Adrenal gland (tissue), 19 donors: ENCODE measurements at regions of chr5 and their contacts with region 1.

Region 1: DNA sequence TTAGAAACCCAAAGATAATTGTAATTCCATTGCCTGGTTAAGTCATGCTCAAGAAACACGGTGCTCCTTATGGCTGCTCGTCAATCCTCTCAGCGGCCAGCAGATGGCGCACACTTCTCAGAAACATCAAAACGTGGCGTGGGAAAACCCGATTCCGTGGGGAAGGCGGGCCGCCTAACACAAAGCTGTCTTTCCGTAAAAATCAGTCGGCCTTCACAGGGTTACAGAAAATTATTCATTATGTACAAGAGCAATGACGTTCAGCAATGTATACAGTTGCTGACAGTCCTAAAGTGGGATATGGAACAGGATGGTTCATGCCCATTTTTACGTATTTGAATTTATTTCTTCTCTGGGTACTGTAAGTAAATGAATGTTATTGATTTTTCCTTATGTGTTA is 83.5 kb downstream of the PDE4D start:
- DNase-seq: peak; percentile 54 to 85 (median 72)
- H3K4me3 ChIP-seq: no peak overlapping the region
- H3K27ac ChIP-seq: no peak overlapping the region
- H3K4me1 ChIP-seq: no peaks in the 10 kb centered on the region
- H3K27me3 ChIP-seq: no peaks in the 10 kb centered on the region
- CTCF ChIP-seq: peak; percentile 64 to 94 (median 80)
- POLR2A ChIP-seq: no peak

Region 2: DNA sequence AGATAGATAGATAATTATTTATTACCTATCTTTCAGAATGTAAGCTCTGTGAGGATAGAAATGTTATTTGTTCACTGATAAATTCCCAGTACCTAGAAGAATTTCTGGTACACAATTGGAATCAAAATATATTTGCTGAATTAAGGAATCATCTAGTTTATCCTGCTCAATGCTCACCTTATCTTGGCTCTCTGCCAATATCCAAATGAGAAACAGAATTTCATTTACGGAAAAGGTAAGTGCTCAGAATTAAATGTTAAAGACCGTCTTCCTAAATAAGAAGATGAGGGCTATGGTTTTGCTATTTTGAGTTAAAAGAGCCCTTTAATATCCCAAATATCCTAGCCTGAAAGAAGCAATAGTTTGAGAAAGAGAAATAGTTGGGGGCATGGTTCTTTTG is 315.6 kb after region 1 on chr5:
- intact Hi-C with region 1: no loop called
- DNase-seq: no peak
- H3K4me3 ChIP-seq: no peak overlapping the region
- H3K27ac ChIP-seq: no peak overlapping the region
- H3K4me1 ChIP-seq: no peaks in the 10 kb centered on the region
- H3K27me3 ChIP-seq: no peaks in the 10 kb centered on the region
- CTCF ChIP-seq: no peak
- POLR2A ChIP-seq: no peak

Region 3: GRCh38 chr5:60668686-60669304 is 858.8 kb after region 1 on chr5:
- intact Hi-C with region 1: loop called in 1 of 2 experiments (anchors 10 kb)
- DNase-seq: no peak
- H3K4me3 ChIP-seq: no peak overlapping the region
- H3K27ac ChIP-seq: no peak overlapping the region
- H3K4me1 ChIP-seq: no peaks in the 10 kb centered on the region
- H3K27me3 ChIP-seq: no peaks in the 10 kb centered on the region
- CTCF ChIP-seq: peak; percentile 26 to 73 (median 46)
- POLR2A ChIP-seq: no peak